Naive thymus-derived CD4-positive, alpha-beta T cell (primary cell): ENCODE measurements at regions of chr5 and their contacts with region 1.

Region 1: DNA sequence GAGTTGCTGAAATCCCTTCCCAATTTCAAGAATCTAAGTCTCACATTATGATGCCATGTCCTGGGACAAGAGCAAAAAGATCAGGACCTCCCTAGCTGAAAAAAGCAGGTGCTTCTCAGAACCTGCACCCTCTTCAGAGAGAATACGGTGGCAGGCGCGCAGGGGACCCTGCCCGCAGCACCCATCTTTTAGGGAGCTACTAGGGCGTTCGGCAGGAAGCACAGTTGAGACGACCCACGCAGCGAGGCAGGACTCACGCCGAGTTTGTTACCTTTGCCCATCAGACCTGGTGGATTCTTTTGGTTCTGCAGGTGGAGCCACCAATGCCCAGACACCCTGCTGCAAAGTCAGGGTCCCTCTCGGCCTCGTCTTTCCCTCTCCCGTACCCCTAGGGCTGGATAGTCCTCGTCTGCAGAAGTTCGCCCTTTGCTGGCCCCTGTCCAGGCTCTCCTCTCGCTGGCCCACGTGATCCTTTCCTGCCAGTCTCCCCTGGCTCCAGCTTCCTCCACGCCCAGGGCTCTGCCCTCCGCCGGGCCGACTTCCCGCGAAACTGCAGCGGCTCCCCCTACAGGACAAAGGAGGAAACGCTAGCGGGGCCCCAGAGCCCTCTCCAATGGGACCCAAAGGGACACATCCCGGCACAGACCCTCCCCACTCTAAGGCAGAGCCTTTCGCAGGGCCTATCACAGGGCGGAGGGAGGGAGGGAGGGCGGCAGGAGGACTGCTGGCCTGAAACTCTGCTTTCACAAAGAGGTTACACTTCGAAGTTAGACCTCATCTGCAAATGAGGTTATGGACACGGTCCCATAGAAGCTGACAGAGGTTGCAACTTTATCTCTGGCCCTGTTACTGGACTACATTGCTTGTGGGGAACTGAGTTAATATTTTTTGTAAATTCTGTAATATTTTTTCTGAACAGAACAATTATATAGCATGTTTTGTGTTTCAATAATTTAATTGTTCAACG is 28.8 kb downstream of the TMEM174 start:
- DNase-seq: peak; percentile 32 to 72 (median 59)
- ATAC-seq: peak; percentile 84
- H3K4me3 ChIP-seq: no peak overlapping the region
- H3K4me3 Mint-ChIP-seq: peak overlapping the region in 5 of 10 donors; percentile 29 to 62 (median 51)
- H3K27ac ChIP-seq: no peak overlapping the region
- H3K27ac Mint-ChIP-seq: peak overlapping the region in 1 of 9 donors; percentile 15
- H3K4me1 ChIP-seq: no peaks in the 10 kb centered on the region
- H3K4me1 Mint-ChIP-seq: peaks cover 0 to 5% (median 3%) of the 10 kb centered on the region in 7 donors
- H3K27me3 ChIP-seq: peaks cover 0 to 11% of the 10 kb centered on the region in 2 donors
- H3K27me3 Mint-ChIP-seq: peaks cover 42 to 76% (median 63%) of the 10 kb centered on the region in 5 donors

Region 2: GRCh38 chr5:72366324-72366976 is 835.4 kb before region 1 on chr5:
- CTCF ChIA-PET with region 1: no interaction called
- POLR2A ChIA-PET with region 1: no interaction called
- intact Hi-C with region 1: loop called in 1 of 2 experiments (anchors 2 kb)
- DNase-seq: peak in 6 of 9 donors; percentile 2 to 32 (median 12)
- ATAC-seq: peak; percentile 74
- H3K4me3 ChIP-seq: no peak overlapping the region
- H3K4me3 Mint-ChIP-seq: no peak overlapping the region
- H3K27ac ChIP-seq: no peak overlapping the region
- H3K27ac Mint-ChIP-seq: peak overlapping the region in 1 of 9 donors; percentile 8
- H3K4me1 ChIP-seq: no peaks in the 10 kb centered on the region
- H3K4me1 Mint-ChIP-seq: peaks cover 0 to 7% (median 0%) of the 10 kb centered on the region in 7 donors
- H3K27me3 ChIP-seq: no peaks in the 10 kb centered on the region
- H3K27me3 Mint-ChIP-seq: no peaks in the 10 kb centered on the region

Region 3: GRCh38 chr5:72920690-72921502 is 280.9 kb before region 1 on chr5:
- CTCF ChIA-PET with region 1: interaction called, 3 read pairs
- POLR2A ChIA-PET with region 1: no interaction called
- intact Hi-C with region 1: loop called in 1 of 2 experiments (anchors 1 kb)
- DNase-seq: peak in 1 of 9 donors; percentile 1
- ATAC-seq: peak; percentile 50
- H3K4me3 ChIP-seq: no peak overlapping the region
- H3K4me3 Mint-ChIP-seq: no peak overlapping the region
- H3K27ac ChIP-seq: no peak overlapping the region
- H3K27ac Mint-ChIP-seq: no peak overlapping the region
- H3K4me1 ChIP-seq: no peaks in the 10 kb centered on the region
- H3K4me1 Mint-ChIP-seq: peaks cover 0 to 1% (median 0%) of the 10 kb centered on the region in 7 donors
- H3K27me3 ChIP-seq: no peaks in the 10 kb centered on the region
- H3K27me3 Mint-ChIP-seq: no peaks in the 10 kb centered on the region

Region 4: DNA sequence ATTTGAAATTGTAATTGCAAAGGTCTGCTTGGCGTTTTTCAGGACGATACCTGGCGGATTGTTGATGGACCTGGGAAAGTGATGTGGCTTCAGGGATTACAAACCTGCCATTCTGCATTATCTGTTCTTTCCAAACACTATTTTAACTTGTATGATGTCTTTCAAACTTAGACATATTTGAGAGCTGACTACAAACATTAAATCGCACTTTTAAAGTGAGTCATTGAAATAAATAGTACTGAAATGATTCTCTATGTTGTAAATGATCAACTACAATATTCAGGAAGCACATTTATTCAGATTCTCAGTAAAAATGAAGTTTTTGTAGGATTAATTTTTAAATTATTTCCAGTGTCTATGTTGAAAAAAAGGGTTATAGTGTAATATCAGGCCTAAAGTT is 113.8 kb before region 1 on chr5:
- CTCF ChIA-PET with region 1: interaction called, 4 read pairs
- POLR2A ChIA-PET with region 1: no interaction called
- intact Hi-C with region 1: loop called (anchors 1 to 2 kb)
- DNase-seq: no peak
- ATAC-seq: no peak
- H3K4me3 ChIP-seq: no peak overlapping the region
- H3K4me3 Mint-ChIP-seq: no peak overlapping the region
- H3K27ac ChIP-seq: no peak overlapping the region
- H3K27ac Mint-ChIP-seq: no peak overlapping the region
- H3K4me1 ChIP-seq: no peaks in the 10 kb centered on the region
- H3K4me1 Mint-ChIP-seq: no peaks in the 10 kb centered on the region
- H3K27me3 ChIP-seq: peaks cover 0 to 3% of the 10 kb centered on the region in 2 donors
- H3K27me3 Mint-ChIP-seq: peaks cover 7 to 28% (median 15%) of the 10 kb centered on the region in 5 donors

Region 5: DNA sequence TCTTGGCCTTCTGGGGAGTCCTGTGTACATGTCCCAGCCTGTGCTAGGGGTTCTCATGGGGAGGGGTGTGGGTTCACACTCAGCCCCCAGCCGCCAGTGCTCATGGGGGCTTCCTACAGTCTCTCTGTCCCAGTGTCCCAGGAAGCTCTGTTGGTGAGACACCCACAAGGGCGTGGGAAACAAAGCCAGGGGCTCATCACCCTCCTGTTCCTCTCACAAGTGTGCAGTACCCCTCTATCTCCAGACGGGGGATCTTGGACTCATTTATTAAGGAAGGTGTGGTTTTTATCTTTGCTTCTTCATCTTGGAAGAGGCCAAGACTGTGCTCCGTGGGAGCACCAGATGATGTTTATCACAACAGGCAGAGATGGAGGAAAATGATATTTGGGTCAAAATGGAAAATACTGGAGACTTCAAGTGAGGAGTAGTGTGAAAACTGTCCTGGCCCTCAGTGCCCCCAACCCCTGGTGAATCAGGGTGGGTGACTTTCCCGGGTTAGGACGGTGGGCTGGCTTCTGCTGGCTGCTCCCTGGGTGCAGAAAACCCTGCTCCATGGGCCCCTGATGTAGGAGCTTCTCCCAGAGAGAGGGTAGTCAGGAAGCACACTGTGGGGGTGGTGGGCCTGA is 66.3 kb before region 1 on chr5:
- CTCF ChIA-PET with region 1: no interaction called
- POLR2A ChIA-PET with region 1: no interaction called
- intact Hi-C with region 1: loop called in 1 of 2 experiments (anchors 2 kb)
- DNase-seq: peak in 1 of 9 donors; percentile 11
- ATAC-seq: peak; percentile 31
- H3K4me3 ChIP-seq: no peak overlapping the region
- H3K4me3 Mint-ChIP-seq: no peak overlapping the region
- H3K27ac ChIP-seq: no peak overlapping the region
- H3K27ac Mint-ChIP-seq: no peak overlapping the region
- H3K4me1 ChIP-seq: no peaks in the 10 kb centered on the region
- H3K4me1 Mint-ChIP-seq: no peaks in the 10 kb centered on the region
- H3K27me3 ChIP-seq: peaks cover 0 to 9% of the 10 kb centered on the region in 2 donors
- H3K27me3 Mint-ChIP-seq: peaks cover 47 to 57% (median 54%) of the 10 kb centered on the region in 5 donors

Region 6: DNA sequence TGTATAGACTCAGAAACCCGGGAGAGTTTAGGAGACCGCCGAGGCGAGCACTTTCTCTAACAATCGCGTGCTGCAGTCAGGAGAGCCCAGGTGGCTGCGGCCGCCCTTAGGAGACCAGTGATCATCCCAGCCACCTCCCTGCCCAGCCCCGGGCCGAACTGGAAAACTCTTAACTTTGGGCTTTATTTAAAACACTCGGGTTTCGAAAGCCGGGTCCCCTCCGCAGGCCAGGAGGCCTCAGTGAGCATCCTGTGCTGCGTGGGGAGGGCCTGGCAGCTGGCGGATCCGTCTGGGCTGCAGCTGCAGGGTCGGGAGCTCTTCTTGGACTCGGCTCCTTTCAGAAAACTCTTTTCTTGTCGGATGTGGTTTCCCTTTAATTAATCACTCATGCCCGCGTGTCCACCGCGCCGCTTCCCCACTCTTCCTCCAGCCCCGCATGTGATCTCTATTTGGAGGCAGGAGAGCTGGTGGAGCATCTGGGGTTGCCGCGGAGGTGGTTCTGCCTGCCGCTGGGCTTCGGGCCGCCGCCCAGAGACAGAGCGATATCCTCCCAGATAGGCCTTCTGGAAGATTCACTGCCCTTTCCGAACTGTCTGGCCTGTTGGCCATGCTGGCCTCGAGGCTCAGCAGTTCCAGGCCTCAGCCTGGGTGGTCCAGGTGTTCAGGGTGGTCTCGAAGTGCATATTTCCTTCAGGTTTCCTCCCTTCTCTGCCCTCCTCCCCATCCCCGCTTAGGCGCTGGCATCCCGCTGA is 30.6 kb after region 1 on chr5:
- CTCF ChIA-PET with region 1: no interaction called
- POLR2A ChIA-PET with region 1: no interaction called
- intact Hi-C with region 1: no loop called
- DNase-seq: peak in 1 of 9 donors; percentile 21
- ATAC-seq: no peak
- H3K4me3 ChIP-seq: no peak overlapping the region
- H3K4me3 Mint-ChIP-seq: peak overlapping the region in 9 of 10 donors; percentile 41 to 85 (median 56)
- H3K27ac ChIP-seq: no peak overlapping the region
- H3K27ac Mint-ChIP-seq: no peak overlapping the region
- H3K4me1 ChIP-seq: peaks cover 3 to 18% of the 10 kb centered on the region in 2 donors
- H3K4me1 Mint-ChIP-seq: peaks cover 0 to 33% (median 28%) of the 10 kb centered on the region in 7 donors
- H3K27me3 ChIP-seq: peaks cover 4 to 41% of the 10 kb centered on the region in 2 donors
- H3K27me3 Mint-ChIP-seq: peaks cover 77 to 85% (median 84%) of the 10 kb centered on the region in 5 donors